A549 (cell line): ENCODE measurements at regions of chr20 and their contacts with region 1.

Region 1: GRCh38 chr20:63537525-63538203 is 488 bp upstream of the PTK6 start:
- DNase-seq: peak; percentile 98 to 100
- ATAC-seq: peak; percentile 86 to 95
- H3K4me3 ChIP-seq: peak overlapping the region; percentile 59
- H3K27ac ChIP-seq: peak overlapping the region; percentile 93 to 97
- H3K4me1 ChIP-seq: peaks cover 18% of the 10 kb centered on the region
- CTCF ChIP-seq: peak; percentile 94
- EP300 ChIP-seq: no peak
- POLR2A ChIP-seq: peak; percentile 50
- RAD21 ChIP-seq: peak; percentile 94 to 99

Region 2: GRCh38 chr20:63272584-63273579 is 264.8 kb before region 1 on chr20 and contains the start of gene ARFGAP1:
- CTCF ChIA-PET with region 1: no interaction called
- POLR2A ChIA-PET with region 1: no interaction called
- DNase-seq: peak; percentile 86 to 88
- ATAC-seq: peak; percentile 90 to 95
- H3K4me3 ChIP-seq: peak within 1 kb of the TSS; percentile 86
- H3K27ac ChIP-seq: peak within 1 kb of the TSS; percentile 86 to 98
- H3K4me1 ChIP-seq: peaks cover 23% of the 10 kb centered on the region; the same call in 2 of the 3 replicates
- CTCF ChIP-seq: no peak
- EP300 ChIP-seq: no peak
- POLR2A ChIP-seq: peak; percentile 78
- RAD21 ChIP-seq: no peak
- polyA plus RNA-seq, gene ARFGAP1: 41.0 and 43.5 TPM in 2 replicates

Region 3: DNA sequence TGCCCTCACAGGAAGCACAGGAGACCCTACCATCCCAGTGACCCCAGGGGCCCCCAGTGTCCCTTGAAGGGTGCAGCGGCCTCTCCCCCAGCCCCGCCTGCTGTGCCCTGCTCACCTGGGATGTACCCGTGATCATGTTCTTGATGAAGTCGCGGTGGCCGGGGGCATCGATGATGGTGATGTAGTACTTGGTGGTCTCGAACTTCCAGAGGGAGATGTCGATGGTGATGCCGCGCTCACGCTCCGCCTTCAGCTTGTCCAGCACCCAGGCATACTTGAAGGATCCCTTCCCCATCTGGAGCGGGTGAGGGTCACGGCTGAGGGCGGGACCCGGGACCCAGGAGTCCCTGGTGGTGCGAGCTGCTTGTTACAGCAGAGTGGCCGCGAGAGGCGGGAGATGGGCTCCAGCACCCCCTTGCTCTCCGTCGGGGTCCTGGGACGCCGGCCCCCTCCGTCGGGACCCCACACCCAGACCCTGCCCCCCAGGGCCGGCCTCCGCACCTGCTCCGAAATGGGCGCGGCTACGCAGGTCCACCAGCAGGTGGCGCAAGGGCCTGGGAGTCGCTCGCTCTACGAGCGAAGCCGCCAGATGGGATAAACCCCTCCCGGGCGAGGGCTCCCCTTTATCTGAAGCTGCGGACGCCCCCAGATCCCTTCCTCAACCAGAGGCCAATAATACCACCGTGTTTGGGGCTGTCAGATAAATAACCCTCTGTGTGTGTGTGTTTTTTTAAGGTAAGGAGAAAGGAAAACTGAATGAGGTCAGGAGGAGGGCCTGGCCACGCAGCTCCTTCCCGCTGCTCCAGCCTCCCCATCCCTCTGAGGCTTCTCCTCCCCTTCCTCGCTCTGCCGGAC is 41.7 kb before region 1 on chr20:
- CTCF ChIA-PET with region 1: interaction called, 50 read pairs
- POLR2A ChIA-PET with region 1: no interaction called
- DNase-seq: peak; percentile 58 to 73
- ATAC-seq: peak in 1 of 2 experiments; percentile 79; a peak in 3 of 6 replicates
- H3K4me3 ChIP-seq: no peak overlapping the region
- H3K27ac ChIP-seq: peak overlapping the region in 1 of 2 experiments; percentile 55; a peak in 3 of 6 replicates
- H3K4me1 ChIP-seq: peaks cover 27% of the 10 kb centered on the region
- CTCF ChIP-seq: peak; percentile 90
- EP300 ChIP-seq: no peak
- POLR2A ChIP-seq: no peak
- RAD21 ChIP-seq: peak; percentile 52 to 63

Region 4: GRCh38 chr20:63567386-63568169 is 29.9 kb after region 1 on chr20:
- CTCF ChIA-PET with region 1: interaction called, 49 read pairs
- POLR2A ChIA-PET with region 1: no interaction called
- DNase-seq: no peak
- ATAC-seq: no peak
- H3K4me3 ChIP-seq: no peak overlapping the region
- H3K27ac ChIP-seq: no peak overlapping the region
- H3K4me1 ChIP-seq: no peaks in the 10 kb centered on the region
- CTCF ChIP-seq: no peak
- EP300 ChIP-seq: no peak
- POLR2A ChIP-seq: no peak
- RAD21 ChIP-seq: no peak

Region 5: GRCh38 chr20:63641792-63642544 is 104.3 kb after region 1 on chr20:
- CTCF ChIA-PET with region 1: interaction called, 12 read pairs
- POLR2A ChIA-PET with region 1: interaction called, 4 read pairs
- DNase-seq: peak; percentile 74 to 89
- ATAC-seq: peak; percentile 80 to 83
- H3K4me3 ChIP-seq: peak overlapping the region; percentile 54
- H3K27ac ChIP-seq: peak overlapping the region; percentile 43 to 80
- H3K4me1 ChIP-seq: peaks cover 9% of the 10 kb centered on the region; the same call in 2 of the 3 replicates
- CTCF ChIP-seq: no peak
- EP300 ChIP-seq: no peak
- POLR2A ChIP-seq: 0 out of 2 replicates have a peak, but pooled peaks have one; percentile 26
- RAD21 ChIP-seq: no peak

Region 6: GRCh38 chr20:63795178-63795830 is 257.6 kb after region 1 on chr20:
- CTCF ChIA-PET with region 1: interaction called, 12 read pairs
- POLR2A ChIA-PET with region 1: no interaction called
- DNase-seq: no peak
- ATAC-seq: peak in 1 of 2 experiments; percentile 33; a peak in 1 of 6 replicates
- H3K4me3 ChIP-seq: no peak overlapping the region
- H3K27ac ChIP-seq: no peak overlapping the region
- H3K4me1 ChIP-seq: no peaks in the 10 kb centered on the region
- CTCF ChIP-seq: no peak
- EP300 ChIP-seq: no peak
- POLR2A ChIP-seq: no peak
- RAD21 ChIP-seq: no peak

Region 7: GRCh38 chr20:63973636-63974402 is 436.2 kb after region 1 on chr20:
- CTCF ChIA-PET with region 1: interaction called, 48 read pairs
- POLR2A ChIA-PET with region 1: interaction called, 10 read pairs
- DNase-seq: peak; percentile 86 to 87
- ATAC-seq: peak; percentile 67 to 92
- H3K4me3 ChIP-seq: peak overlapping the region; percentile 46
- H3K27ac ChIP-seq: peak overlapping the region; percentile 80 to 83
- H3K4me1 ChIP-seq: peaks cover 42% of the 10 kb centered on the region
- CTCF ChIP-seq: peak; percentile 97
- EP300 ChIP-seq: no peak
- POLR2A ChIP-seq: peak; percentile 56
- RAD21 ChIP-seq: peak; percentile 93 to 94

Region 8: GRCh38 chr20:64119681-64120341 is 582.1 kb after region 1 on chr20:
- CTCF ChIA-PET with region 1: interaction called, 17 read pairs
- POLR2A ChIA-PET with region 1: no interaction called
- DNase-seq: no peak
- ATAC-seq: peak; percentile 16 to 39; a peak in 4 of 6 replicates
- H3K4me3 ChIP-seq: no peak overlapping the region
- H3K27ac ChIP-seq: no peak overlapping the region
- H3K4me1 ChIP-seq: no peaks in the 10 kb centered on the region
- CTCF ChIP-seq: no peak
- EP300 ChIP-seq: no peak
- POLR2A ChIP-seq: no peak
- RAD21 ChIP-seq: no peak